ENCODE measurements at regions of chr6 and their contacts with region 1.

Region 1: DNA sequence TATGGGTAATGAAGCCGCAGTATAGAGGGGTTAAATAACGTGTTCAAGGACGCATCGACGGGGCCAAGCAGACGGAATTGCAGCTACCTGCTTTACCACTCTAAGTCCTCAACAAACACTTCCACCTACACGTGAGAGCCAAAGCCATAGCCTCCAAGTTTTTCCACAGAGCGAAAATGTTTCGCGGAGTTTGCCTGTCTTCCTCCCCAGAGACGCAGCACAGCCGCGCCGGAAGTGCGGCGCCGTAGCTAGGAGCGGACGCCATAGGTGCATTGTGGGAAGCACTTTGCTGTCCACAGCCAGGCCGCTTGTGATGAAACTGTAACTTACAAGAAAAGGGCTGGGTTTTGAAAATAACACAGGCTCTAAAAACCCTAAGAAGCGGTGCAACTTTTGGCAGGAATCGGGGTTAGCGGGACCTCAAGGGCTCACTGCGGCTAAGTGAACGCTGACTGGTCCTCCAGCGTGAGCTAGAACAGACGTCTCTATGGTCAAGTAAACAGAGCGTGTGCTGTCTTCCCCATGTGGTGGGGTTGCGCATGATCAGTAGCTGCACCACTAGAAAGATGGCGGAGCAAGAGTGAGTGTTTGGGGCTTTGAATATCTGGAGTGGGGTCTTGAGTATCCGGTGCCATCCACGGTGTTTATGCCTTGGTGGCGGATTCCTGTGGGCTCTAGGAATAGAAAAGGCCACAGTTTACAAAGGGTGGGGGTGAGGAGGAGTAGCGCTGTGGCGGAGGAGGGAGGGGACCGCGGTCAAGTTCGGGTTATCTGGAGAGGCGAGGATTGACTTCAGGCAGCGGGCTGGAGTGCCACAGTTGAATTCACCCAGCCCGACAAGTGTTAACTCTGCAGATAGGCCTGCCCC is at the start of gene RPL7L1:
- DNase-seq: peak; percentile 91
- H3K4me3 ChIP-seq: peak within 1 kb of the TSS; percentile 96
- H3K27ac ChIP-seq: peak within 1 kb of the TSS; percentile 93
- H3K4me1 ChIP-seq: peaks cover 13% of the 10 kb centered on the region; the same call in 1 of the 2 replicates
- H3K27me3 ChIP-seq: no peaks in the 10 kb centered on the region
- total RNA-seq, gene RPL7L1: 112 and 133 TPM in 2 replicates

Region 2: GRCh38 chr6:42618686-42619085 is 260.9 kb before region 1 on chr6:
- in situ Hi-C with region 1: no loop called
- DNase-seq: peak; percentile 89
- H3K4me3 ChIP-seq: no peak overlapping the region
- H3K27ac ChIP-seq: peak overlapping the region; percentile 61
- H3K4me1 ChIP-seq: peaks cover 15% of the 10 kb centered on the region; the same call in 1 of the 2 replicates
- H3K27me3 ChIP-seq: no peaks in the 10 kb centered on the region

Region 3: GRCh38 chr6:42661540-42662153 is 218.0 kb before region 1 on chr6:
- in situ Hi-C with region 1: loop called (anchors 10 kb)
- DNase-seq: peak; percentile 79
- H3K4me3 ChIP-seq: no peak overlapping the region
- H3K27ac ChIP-seq: no peak overlapping the region
- H3K4me1 ChIP-seq: no peaks in the 10 kb centered on the region
- H3K27me3 ChIP-seq: no peaks in the 10 kb centered on the region

Measured in GM23248 (cell line).